Endothelial cell of umbilical vein (primary cell): ENCODE measurements at regions of chr6 and their contacts with region 1.

Region 1: DNA sequence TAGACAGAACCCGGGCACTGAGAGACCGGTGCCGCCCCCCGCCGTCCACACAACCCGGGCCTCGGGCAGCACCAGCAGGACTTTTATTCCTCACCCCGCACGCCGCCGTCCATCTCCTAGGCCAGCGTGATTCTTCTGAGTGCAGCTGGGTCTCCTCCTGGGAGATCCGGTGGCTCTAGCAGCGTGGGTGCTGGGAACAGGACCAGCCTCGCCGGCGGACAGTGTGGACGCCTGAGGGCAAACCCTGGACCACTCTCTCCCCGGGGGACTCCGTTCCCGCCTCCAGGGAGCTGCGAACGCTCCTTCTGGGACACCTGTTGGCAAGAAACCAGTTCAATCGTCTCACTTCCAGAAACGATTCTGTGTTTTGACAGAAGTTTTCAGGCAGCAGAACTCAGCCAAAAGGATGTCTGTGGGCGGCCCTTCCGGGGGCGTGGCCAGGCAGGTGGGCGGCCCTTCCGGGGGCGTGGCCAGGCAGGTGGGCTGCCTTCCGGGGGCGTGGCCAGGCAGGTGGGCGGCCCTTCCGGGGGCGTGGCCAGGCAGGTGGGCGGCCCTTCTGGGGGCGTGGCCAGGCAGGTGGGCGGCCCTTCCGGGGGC is 130.7 kb downstream of the DLL1 start:
- DNase-seq: no peak
- H3K4me3 ChIP-seq: no peak overlapping the region
- H3K27ac ChIP-seq: no peak overlapping the region
- H3K4me1 ChIP-seq: no peaks in the 10 kb centered on the region
- H3K27me3 ChIP-seq: no peaks in the 10 kb centered on the region
- CTCF ChIP-seq: no peak
- POLR2A ChIP-seq: no peak

Region 2: DNA sequence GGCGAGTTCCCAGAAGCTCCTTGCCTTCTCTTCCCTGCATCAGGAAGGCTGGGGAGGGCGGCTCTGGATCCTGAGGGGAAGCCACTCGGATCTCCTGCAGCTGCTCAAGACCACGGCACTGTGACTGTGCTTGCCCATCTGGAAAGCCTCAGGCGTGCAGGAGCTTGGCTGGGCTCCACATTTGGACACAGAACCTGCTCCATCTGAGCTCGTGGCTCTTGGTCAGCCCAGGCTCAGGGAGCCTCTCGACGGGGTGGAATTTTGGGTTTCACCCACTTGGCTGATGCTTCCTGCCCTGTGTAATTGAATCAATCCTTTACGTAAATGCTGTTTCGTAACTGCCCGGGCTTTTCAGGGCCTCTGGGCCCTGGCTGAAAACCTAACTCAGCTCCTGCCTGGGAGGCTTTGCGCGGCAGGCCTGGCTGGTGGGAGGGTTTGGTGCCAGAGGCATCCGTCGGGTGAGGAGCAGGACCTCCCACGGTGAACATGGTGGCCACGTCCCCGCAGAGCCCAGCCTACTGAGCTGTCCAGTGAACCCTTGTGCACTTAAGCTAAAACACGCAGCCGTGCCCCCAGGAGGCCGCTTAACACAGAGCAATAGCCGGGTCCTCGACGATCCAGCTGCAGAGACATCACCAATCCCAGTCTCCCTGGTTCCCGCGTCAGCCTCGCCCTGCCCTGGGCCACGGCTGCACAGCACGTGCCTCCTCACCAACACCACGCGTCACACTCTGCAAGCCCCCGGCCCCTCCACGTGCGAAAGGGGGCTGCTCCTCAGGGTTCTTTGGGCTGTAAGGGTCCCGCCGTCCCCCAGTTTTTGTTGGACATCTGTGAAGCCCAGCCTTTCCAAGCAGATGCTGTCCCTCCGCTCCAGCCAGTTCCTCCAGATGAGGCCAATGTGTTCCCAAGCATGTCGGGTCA is 110.2 kb before region 1 on chr6:
- CTCF ChIA-PET with region 1: no interaction called
- POLR2A ChIA-PET with region 1: no interaction called
- dilution Hi-C with region 1: no loop called
- intact Hi-C with region 1: no loop called
- DNase-seq: no peak
- H3K4me3 ChIP-seq: no peak overlapping the region
- H3K27ac ChIP-seq: no peak overlapping the region
- H3K4me1 ChIP-seq: no peaks in the 10 kb centered on the region
- H3K27me3 ChIP-seq: no peaks in the 10 kb centered on the region
- CTCF ChIP-seq: no peak
- POLR2A ChIP-seq: no peak

Region 3: GRCh38 chr6:170146638-170147037 is 13.5 kb before region 1 on chr6:
- CTCF ChIA-PET with region 1: no interaction called
- POLR2A ChIA-PET with region 1: no interaction called
- dilution Hi-C with region 1: no loop called
- intact Hi-C with region 1: loop called (anchors 1 kb)
- DNase-seq: no peak
- H3K4me3 ChIP-seq: no peak overlapping the region
- H3K27ac ChIP-seq: no peak overlapping the region
- H3K4me1 ChIP-seq: no peaks in the 10 kb centered on the region
- H3K27me3 ChIP-seq: no peaks in the 10 kb centered on the region
- CTCF ChIP-seq: no peak
- POLR2A ChIP-seq: no peak